HEK293T (cell line): ENCODE measurements at regions of chr2 and their contacts with region 1.

Region 1: DNA sequence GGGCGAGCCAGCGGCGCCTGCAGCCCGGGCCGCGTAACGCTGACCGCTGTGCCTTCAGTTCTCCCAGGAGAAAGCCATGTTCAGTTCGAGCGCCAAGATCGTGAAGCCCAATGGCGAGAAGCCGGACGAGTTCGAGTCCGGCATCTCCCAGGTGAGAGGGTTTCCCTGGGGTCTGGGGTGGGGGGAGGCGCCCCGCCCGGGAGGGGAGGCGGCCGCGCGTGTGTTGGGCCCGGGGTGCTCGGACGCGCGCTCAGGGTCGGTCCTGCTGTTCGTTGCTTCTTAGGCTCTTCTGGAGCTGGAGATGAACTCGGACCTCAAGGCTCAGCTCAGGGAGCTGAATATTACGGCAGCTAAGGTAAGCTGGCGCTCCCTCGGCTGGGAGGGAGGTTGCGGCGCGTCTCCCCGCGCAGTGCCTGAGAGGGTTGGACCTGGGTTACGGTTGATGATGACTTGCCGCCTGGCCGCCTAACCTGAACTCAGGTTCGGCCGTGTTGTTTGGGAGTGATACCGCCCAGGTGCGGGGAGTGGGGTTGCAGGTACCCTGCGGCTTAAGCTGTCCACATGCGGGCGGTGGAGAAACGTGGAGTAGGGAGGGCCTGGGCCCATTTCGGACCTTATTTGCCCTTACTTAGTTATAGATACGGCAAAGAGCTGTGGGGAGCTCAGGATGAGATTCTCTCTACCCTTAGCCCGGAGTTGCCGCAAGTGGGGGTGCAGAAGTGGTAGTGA is 638 bp downstream of the RPS7 start:
- DNase-seq: no peak

Region 2: DNA sequence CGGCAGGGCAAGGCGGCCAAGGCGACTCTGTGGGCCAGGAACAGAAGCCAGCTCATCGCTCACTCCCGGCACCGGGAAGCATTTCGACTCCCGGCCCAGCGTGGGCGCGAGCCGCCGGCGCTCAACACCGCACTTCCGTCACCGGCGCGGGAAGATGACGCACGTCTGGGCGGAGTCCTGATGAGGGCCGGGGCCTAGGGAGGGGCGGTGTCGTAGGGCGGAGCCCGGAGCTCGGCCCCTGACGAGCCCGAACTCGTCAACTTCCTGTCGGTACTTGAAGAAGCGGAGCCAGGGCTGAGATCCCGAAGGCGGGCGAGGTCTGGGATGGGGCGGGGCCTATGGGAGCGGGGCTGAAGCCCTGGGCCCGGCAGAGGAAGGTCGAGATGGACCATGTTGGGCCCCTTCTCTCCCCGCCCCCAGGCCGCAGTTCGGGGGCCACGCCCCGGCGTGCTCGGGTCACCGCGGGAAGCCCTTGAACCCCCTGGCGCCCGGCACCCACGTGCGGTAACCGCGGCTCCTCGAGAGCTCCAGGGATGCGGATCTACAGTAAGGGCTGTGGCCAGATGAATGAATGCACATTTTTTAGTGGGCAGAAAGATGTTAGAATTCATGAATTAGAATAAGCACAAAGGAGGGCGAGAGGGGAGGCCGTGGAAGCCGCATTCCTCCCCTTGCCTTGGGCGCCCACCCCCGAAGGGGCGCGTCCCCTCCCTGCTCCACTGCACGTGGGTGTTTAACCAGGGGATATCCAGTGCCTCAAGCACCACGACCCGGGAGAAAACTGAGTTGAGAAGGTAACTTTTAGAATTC is 17.3 kb before region 1 on chr2 and contains the start of gene RNASEH1:
- CTCF ChIA-PET with region 1: interaction called, 3 read pairs
- POLR2A ChIA-PET with region 1: interaction called, 14 read pairs
- DNase-seq: peak; percentile 99